Activated B cell treated with CpG ODN at 0.5 μM for 24 hours (primary cell): ENCODE measurements at regions of chr2 and their contacts with region 1.

Region 1: DNA sequence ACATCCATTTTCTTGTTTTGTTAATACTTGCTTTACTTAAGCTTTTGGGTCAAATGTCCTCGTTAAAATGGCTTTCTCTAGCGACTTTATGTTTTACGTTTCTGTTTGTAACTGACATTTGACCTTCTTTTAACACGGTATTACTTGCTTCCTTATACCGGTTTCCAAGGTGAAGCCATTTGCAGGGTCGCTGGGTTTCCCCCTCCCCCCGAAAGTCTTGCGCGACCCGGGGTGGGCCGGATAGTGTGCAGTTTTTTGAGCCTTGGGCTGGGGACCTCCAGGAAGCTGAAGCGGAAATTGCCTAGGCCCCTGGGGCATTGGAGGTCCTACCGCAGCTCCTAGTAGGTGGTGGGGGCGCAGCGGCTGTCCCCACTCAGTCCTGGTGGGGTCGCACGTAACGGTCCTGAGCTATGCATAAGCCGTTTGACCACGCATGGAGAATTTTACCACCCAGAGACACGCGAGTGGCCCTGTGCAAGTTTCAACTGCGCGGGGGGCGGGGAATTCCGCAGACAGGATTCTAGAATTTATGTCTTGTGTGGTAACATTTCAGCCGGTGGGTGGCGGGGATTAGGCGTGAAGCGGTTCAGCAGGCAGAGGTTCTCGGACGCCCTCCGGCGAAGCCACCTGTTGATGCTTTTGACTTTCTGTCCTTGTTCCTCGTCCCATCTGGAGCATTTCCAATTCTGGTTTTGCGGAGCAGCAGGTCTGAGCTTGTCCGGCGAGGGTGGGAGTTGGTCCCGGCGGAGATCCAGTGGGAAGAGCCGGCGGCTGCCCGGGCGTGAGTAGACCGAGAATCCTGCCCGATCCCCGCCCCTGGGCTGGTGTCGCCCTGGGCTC is 2.4 kb downstream of the CFLAR start:
- DNase-seq: peak; percentile 78
- ATAC-seq: peak; percentile 70
- H3K4me3 Mint-ChIP-seq: peak overlapping the region; percentile 100
- H3K27ac Mint-ChIP-seq: peak overlapping the region; percentile 99
- H3K4me1 Mint-ChIP-seq: peaks cover 77% of the 10 kb centered on the region
- H3K27me3 Mint-ChIP-seq: no peaks in the 10 kb centered on the region
- CTCF ChIP-seq: no peak

Region 2: GRCh38 chr2:199716807-199717586 is 1401.3 kb before region 1 on chr2:
- CTCF ChIA-PET with region 1: no interaction called
- POLR2A ChIA-PET with region 1: no interaction called
- intact Hi-C with region 1: no loop called
- DNase-seq: no peak
- ATAC-seq: no peak
- H3K4me3 Mint-ChIP-seq: no peak overlapping the region
- H3K27ac Mint-ChIP-seq: no peak overlapping the region
- H3K4me1 Mint-ChIP-seq: no peaks in the 10 kb centered on the region
- H3K27me3 Mint-ChIP-seq: peaks cover 3% of the 10 kb centered on the region
- CTCF ChIP-seq: no peak

Region 3: GRCh38 chr2:200811336-200812121 is 306.8 kb before region 1 on chr2 and contains the start of gene BZW1:
- CTCF ChIA-PET with region 1: no interaction called
- POLR2A ChIA-PET with region 1: interaction called, 5 read pairs
- intact Hi-C with region 1: loop called (anchors 5 kb)
- DNase-seq: peak; percentile 94
- ATAC-seq: peak; percentile 80
- H3K4me3 Mint-ChIP-seq: peak within 1 kb of the TSS; percentile 98
- H3K27ac Mint-ChIP-seq: peak within 1 kb of the TSS; percentile 99
- H3K4me1 Mint-ChIP-seq: peaks cover 34% of the 10 kb centered on the region
- H3K27me3 Mint-ChIP-seq: no peaks in the 10 kb centered on the region
- CTCF ChIP-seq: no peak
- total RNA-seq, gene BZW1: 174 and 197 TPM in 2 replicates

Region 4: GRCh38 chr2:200901459-200902072 is 216.8 kb before region 1 on chr2:
- CTCF ChIA-PET with region 1: interaction called, 4 read pairs
- POLR2A ChIA-PET with region 1: interaction called, 4 read pairs
- intact Hi-C with region 1: loop called (anchors 2 kb)
- DNase-seq: no peak
- ATAC-seq: peak; percentile 100
- H3K4me3 Mint-ChIP-seq: no peak overlapping the region
- H3K27ac Mint-ChIP-seq: peak overlapping the region; percentile 38
- H3K4me1 Mint-ChIP-seq: peaks cover 4% of the 10 kb centered on the region
- H3K27me3 Mint-ChIP-seq: no peaks in the 10 kb centered on the region
- CTCF ChIP-seq: peak; percentile 30

Region 5: GRCh38 chr2:201108341-201108740 is 10.0 kb before region 1 on chr2:
- CTCF ChIA-PET with region 1: interaction called, 3 read pairs
- POLR2A ChIA-PET with region 1: interaction called, 13 read pairs
- intact Hi-C with region 1: no loop called
- DNase-seq: no peak
- ATAC-seq: no peak
- H3K4me3 Mint-ChIP-seq: no peak overlapping the region
- H3K27ac Mint-ChIP-seq: no peak overlapping the region
- H3K4me1 Mint-ChIP-seq: peaks cover 14% of the 10 kb centered on the region
- H3K27me3 Mint-ChIP-seq: no peaks in the 10 kb centered on the region
- CTCF ChIP-seq: no peak

Region 6: GRCh38 chr2:201158111-201158929 is 40.0 kb after region 1 on chr2:
- CTCF ChIA-PET with region 1: interaction called, 51 read pairs
- POLR2A ChIA-PET with region 1: interaction called, 147 read pairs
- intact Hi-C with region 1: loop called (anchors 1 kb)
- DNase-seq: peak; percentile 71
- ATAC-seq: peak; percentile 87
- H3K4me3 Mint-ChIP-seq: peak overlapping the region; percentile 73
- H3K27ac Mint-ChIP-seq: peak overlapping the region; percentile 95
- H3K4me1 Mint-ChIP-seq: peaks cover 56% of the 10 kb centered on the region
- H3K27me3 Mint-ChIP-seq: no peaks in the 10 kb centered on the region
- CTCF ChIP-seq: no peak

Region 7: DNA sequence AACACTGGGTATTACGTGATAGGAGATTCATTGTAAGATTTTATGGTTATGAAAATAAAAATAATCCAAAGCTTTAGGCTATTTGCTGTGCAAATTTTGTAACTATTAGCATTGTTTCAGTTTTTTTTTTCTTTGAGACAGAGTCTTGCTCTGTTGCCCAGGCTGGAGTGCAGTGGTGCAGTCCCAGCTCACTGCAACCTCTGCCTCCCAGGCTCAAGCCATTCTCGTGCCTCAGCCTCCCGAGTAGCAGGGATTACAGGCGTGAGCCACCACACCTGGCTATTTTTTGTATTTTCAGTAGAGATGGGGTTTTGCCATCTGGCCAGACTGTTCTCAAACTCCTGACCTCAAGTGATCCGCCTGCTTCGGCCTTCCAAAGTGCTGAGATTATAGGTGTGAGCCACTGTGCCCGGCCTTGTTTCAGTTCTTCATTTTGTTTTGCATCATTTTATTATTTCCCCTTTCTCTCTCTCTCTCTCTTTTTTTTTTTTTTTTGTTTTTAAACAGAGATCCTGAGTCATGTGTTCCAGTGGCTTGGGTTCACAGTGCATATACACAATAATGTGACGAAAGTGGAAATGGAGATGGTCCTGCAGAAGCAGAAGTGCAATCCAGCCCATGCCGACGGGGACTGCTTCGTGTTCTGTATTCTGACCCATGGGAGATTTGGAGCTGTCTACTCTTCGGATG is 90.4 kb after region 1 on chr2:
- CTCF ChIA-PET with region 1: no interaction called
- POLR2A ChIA-PET with region 1: interaction called, 20 read pairs
- intact Hi-C with region 1: loop called (anchors 1 kb)
- DNase-seq: peak; percentile 40
- ATAC-seq: peak; percentile 83
- H3K4me3 Mint-ChIP-seq: peak overlapping the region; percentile 53
- H3K27ac Mint-ChIP-seq: peak overlapping the region; percentile 89
- H3K4me1 Mint-ChIP-seq: peaks cover 43% of the 10 kb centered on the region
- H3K27me3 Mint-ChIP-seq: no peaks in the 10 kb centered on the region
- CTCF ChIP-seq: no peak

Region 8: GRCh38 chr2:201780674-201781581 is 662.6 kb after region 1 on chr2 and contains the start of gene ALS2:
- CTCF ChIA-PET with region 1: no interaction called
- POLR2A ChIA-PET with region 1: no interaction called
- intact Hi-C with region 1: loop called (anchors 5 kb)
- DNase-seq: peak; percentile 95
- ATAC-seq: peak; percentile 90
- H3K4me3 Mint-ChIP-seq: peak within 1 kb of the TSS; percentile 96
- H3K27ac Mint-ChIP-seq: peak within 1 kb of the TSS; percentile 95
- H3K4me1 Mint-ChIP-seq: peaks cover 17% of the 10 kb centered on the region
- H3K27me3 Mint-ChIP-seq: peaks cover 8% of the 10 kb centered on the region
- CTCF ChIP-seq: no peak
- total RNA-seq, gene ALS2: 11.6 and 14.2 TPM in 2 replicates